ENCODE measurements at regions of chrX and their contacts with region 1.

Region 1: DNA sequence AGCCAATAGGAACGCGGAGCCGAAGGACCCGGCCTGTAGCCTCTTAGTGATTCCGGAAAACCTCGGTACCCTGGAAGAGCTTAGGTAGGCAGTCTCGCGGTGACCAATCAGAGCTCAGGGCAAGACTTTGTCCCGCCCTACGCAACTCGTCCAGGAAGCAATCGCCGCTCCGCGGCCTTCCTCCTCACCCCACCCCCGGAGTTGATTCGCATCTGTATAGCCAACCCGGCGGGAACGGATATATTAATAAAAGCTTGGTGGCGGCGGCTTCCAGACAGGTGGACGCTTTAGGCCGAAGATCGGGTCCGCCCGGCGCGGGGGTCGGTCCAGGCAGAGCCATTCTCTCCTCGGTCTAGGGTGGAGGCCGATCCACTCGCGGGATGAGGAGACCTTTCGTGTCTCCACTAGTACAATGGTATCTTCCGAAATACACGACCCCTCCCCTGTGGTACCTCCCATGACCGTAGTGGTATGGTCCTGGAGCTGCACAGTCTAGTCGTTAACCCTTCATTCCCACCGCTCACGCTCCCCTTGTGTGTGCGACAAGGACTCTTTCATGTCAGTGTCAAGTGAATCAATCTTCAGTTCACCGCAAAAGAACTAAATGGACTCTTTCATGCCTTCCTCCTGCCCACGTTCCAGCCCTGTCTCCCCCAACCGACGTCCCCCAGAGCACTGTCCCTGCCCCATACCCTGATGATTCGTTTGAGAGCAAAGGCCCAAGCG is 24.2 kb upstream of the GLOD5 start:
- DNase-seq: peak; percentile 94

Region 2: GRCh38 chrX:48696301-48697181 is 40.8 kb before region 1 on chrX and contains the start of gene SUV39H1:
- CTCF ChIA-PET with region 1: no interaction called
- POLR2A ChIA-PET with region 1: interaction called, 22 read pairs
- DNase-seq: peak; percentile 89

Region 3: GRCh38 chrX:48747415-48748016 is 10.1 kb after region 1 on chrX:
- CTCF ChIA-PET with region 1: no interaction called
- POLR2A ChIA-PET with region 1: interaction called, 10 read pairs
- DNase-seq: no peak

Region 4: GRCh38 chrX:48801280-48802088 is 64.1 kb after region 1 on chrX and contains the start of gene HDAC6:
- CTCF ChIA-PET with region 1: no interaction called
- POLR2A ChIA-PET with region 1: interaction called, 20 read pairs
- DNase-seq: peak; percentile 89

Region 5: GRCh38 chrX:48897621-48898306 is 160.4 kb after region 1 on chrX and contains the starts of genes PQBP1 and TIMM17B:
- CTCF ChIA-PET with region 1: no interaction called
- POLR2A ChIA-PET with region 1: interaction called, 11 read pairs
- DNase-seq: peak; percentile 84